A673 (cell line): ENCODE measurements at regions of chr2 and their contacts with region 1.

Region 1: GRCh38 chr2:216698895-216699294 is 3.5 kb upstream of the IGFBP5 start:
- DNase-seq: peak; percentile 76
- H3K4me3 ChIP-seq: no peak overlapping the region
- H3K27ac ChIP-seq: no peak overlapping the region
- H3K4me1 ChIP-seq: peaks cover 44% of the 10 kb centered on the region
- H3K27me3 ChIP-seq: no peaks in the 10 kb centered on the region
- CTCF ChIP-seq: peak; percentile 81

Region 2: DNA sequence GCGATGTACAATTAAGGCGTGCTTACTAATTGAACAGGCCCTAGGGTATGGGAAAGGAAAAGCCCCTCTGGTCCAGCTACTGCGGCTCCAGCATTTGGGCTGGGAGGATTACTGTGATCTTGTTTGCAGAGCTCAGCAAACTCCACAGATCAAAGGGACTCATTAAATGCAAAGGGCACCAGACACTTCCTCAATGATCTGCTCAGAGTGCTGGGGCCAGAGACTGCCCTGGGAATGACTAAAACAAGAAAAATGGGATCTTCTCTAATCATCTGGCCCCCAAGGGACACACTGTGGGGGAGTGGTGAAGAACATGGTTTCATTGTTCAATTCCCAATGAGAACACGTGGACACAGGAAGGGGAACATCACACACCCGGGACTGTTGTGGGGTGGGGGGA is 411.6 kb before region 1 on chr2:
- CTCF ChIA-PET with region 1: no interaction called
- POLR2A ChIA-PET with region 1: no interaction called
- intact Hi-C with region 1: no loop called
- DNase-seq: peak; percentile 45
- H3K4me3 ChIP-seq: no peak overlapping the region
- H3K27ac ChIP-seq: no peak overlapping the region
- H3K4me1 ChIP-seq: peaks cover 3% of the 10 kb centered on the region
- H3K27me3 ChIP-seq: no peaks in the 10 kb centered on the region
- CTCF ChIP-seq: no peak

Region 3: GRCh38 chr2:216960671-216961268 is 261.9 kb after region 1 on chr2:
- CTCF ChIA-PET with region 1: no interaction called
- POLR2A ChIA-PET with region 1: no interaction called
- intact Hi-C with region 1: loop called (anchors 10 kb)
- DNase-seq: no peak
- H3K4me3 ChIP-seq: no peak overlapping the region
- H3K27ac ChIP-seq: no peak overlapping the region
- H3K4me1 ChIP-seq: no peaks in the 10 kb centered on the region
- H3K27me3 ChIP-seq: no peaks in the 10 kb centered on the region
- CTCF ChIP-seq: no peak

Region 4: GRCh38 chr2:217105733-217106649 is 407.1 kb after region 1 on chr2:
- CTCF ChIA-PET with region 1: no interaction called
- POLR2A ChIA-PET with region 1: no interaction called
- intact Hi-C with region 1: no loop called
- DNase-seq: peak; percentile 60
- H3K4me3 ChIP-seq: no peak overlapping the region
- H3K27ac ChIP-seq: no peak overlapping the region
- H3K4me1 ChIP-seq: no peaks in the 10 kb centered on the region
- H3K27me3 ChIP-seq: no peaks in the 10 kb centered on the region
- CTCF ChIP-seq: no peak